ENCODE measurements at regions of chr17 and their contacts with region 1.

Region 1: DNA sequence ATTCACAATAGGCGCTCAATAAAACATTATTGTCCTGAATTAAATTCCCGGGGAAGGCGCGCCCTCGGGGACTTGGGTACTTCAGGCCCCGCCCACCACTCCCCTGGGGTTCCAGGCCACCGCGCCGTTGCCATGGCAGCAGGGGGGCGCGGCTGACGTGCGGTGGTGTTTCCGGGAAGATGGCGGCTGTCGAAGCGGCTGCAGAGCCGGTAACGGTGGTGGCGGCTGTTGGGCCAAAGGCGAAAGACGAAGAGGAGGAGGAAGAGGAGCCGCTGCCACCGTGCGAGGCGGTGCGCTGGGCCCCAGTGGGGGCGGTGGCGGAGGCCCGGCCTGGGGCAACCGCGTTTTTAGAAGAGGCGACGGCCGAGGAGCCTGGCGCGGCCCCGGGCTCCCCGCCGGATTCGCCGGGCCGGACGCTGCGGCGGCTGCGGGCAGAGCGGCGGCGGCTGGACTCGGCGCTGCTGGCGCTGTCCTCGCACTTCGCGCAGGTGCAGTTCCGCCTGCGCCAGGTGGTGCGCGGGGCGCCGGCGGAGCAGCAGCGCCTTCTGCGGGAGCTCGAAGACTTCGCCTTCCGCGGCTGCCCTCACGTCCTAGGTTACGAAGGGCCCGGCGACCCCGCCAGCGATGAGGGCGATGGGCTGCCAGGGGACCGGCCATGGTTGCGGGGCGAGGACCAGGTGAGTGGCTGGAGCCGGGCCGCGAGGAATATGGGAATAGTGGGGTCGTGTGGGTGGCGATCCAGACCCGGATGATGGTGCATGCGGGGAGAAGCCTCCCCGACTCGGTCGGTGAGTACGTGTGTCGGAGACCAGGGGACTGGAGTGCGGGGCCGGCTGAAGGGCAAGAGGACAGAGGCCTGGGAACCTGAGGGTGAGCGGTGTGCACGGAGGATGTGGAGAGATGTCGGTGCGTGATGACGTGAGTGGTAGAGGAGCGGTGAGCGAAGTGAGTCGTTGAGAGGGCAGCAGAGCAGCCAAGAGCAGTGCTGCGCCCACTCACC is at the start of gene RUNDC1:
- DNase-seq: peak; percentile 98
- H3K4me3 Mint-ChIP-seq: peak within 1 kb of the TSS; percentile 96
- H3K27ac Mint-ChIP-seq: peak within 1 kb of the TSS; percentile 98
- H3K4me1 Mint-ChIP-seq: peaks cover 29% of the 10 kb centered on the region
- H3K27me3 Mint-ChIP-seq: no peaks in the 10 kb centered on the region
- total RNA-seq, gene RUNDC1: 20.2 and 20.5 TPM in 2 replicates

Region 2: DNA sequence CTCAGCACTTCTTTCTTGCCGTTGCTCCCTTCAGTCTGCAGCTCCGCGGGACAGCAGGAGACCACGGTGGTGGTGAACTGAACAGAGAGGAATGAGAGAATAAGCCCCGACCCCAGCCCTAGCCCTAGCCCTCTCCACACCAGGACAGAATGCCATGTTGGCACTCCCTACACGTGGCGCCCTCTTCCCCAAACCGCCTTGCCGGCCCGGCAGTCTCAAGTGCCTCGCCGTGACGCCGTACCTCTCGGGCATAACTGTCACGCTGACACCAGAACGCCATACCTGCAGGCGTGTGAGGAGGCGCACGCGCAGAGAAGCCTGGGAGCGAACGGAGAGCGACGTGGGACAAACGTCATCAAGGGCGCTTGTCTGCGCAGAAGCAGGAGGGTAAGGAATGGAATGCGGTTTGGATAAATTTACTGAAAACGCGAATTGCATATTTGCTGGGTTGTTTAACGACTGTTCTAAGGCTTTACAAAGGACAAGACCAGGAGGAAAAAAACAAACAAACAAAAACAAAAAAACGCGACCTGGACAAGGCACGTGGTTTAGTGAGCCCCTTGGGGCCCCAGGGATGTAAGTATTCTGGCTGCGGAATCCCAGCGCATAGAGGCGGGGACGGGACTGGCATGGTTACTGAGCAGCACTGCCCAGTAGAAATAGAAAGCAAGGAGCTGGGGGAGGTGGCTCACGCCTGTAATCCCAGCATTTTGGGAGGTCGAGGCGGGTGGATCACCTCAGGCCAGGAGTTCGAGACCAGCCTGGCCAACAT is 16.4 kb before region 1 on chr17 and contains the start of gene AARSD1:
- intact Hi-C with region 1: loop called (anchors 2 kb)
- DNase-seq: peak; percentile 97
- H3K4me3 Mint-ChIP-seq: peak within 1 kb of the TSS; percentile 90
- H3K27ac Mint-ChIP-seq: peak within 1 kb of the TSS; percentile 95
- H3K4me1 Mint-ChIP-seq: peaks cover 13% of the 10 kb centered on the region
- H3K27me3 Mint-ChIP-seq: no peaks in the 10 kb centered on the region
- total RNA-seq, gene AARSD1: 78.2 and 78.4 TPM in 2 replicates

Region 3: DNA sequence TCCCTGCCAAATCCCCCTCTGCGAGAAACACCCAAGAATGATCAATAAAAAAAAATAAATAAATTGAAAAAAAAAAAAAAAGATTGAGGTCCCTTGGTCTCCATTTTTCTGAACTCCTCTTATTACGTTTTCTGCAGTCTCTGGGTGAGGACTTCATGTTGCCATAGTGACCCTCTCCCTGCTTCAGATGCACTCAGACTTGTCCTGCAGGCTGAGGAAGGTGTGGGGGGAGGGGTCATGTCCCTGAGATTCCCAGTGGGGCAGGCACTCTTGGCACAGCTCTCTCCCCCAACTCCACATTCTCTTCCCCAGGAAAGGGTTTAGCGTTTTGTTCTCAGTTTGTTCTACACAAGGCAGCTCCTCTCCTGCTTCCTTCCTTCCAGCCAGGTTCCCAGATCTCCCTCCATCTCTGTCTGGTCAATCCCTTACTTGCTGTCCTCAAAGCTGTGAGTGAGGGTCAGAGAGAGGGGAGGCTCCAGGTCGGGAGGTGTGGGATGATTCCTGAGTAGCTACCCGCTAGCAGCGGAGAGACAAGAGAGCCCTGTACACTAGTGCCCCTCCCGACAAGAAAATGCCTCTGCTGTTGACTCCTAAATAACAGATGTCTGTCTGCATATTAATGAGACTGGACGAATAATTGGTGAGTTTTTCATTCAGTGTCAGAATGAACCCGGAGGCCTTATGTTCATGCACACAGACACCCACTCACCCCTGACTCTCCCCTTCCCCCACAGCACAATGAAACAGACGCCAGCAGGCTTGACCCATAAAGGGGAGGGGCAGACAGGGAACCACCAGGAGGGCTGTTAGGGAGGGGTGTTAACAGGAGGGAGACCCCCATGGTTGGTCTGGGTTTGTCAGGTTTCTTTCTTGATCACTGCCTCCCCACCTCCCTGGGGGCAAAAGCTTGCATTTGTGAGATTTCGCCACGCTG is 53.5 kb after region 1 on chr17:
- intact Hi-C with region 1: no loop called
- DNase-seq: no peak
- H3K4me3 Mint-ChIP-seq: no peak overlapping the region
- H3K27ac Mint-ChIP-seq: no peak overlapping the region
- H3K4me1 Mint-ChIP-seq: no peaks in the 10 kb centered on the region
- H3K27me3 Mint-ChIP-seq: no peaks in the 10 kb centered on the region

Measured in activated CD4-positive, alpha-beta T cell treated with anti-CD3 and anti-CD28 coated beads, Interleukin-2, amount 10 ng/mL, durations not matched to agents 24 days and 14 days (primary cell).